A549 (cell line): ENCODE measurements at regions of chr15 and their contacts with region 1.

Region 1: DNA sequence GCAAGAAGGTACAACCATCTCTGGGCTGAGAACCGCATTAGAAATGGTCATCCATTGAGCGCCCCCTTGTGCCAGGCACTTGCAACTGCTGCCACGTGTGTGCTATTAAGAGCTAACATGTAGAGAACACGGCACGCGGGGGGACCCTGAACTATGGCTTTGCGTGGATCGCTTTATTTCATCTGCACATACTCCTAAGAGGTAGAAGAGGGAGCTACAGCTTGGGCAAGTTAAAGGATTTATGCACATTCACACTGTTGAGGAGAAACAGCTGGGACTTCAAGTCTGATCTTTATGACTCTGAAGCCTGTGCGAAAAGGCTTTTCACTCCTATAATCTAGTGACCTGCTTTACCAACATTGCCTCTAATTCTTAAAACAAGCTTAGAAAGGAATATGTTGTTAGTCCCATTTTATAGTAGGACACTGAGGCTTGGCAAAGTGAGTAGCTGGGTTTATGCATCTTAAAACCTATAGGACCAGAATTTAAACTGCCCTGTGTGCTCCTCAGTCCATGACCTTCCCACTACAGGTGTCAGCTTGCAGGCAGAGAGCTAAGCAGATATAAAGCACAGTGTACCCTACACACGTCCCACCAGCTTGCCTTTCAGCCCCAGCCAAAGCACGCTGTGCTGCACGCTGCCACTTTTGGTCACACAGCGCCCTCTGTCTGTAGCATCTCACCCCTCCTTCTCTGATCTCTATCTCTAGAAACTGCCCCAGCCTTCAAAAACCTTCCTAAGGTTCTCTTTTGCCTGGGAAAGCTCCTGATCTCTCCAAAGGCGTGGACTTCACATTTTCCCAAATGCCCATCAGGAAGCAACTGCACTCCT is 57.8 kb downstream of the STARD5 start:
- DNase-seq: peak; percentile 82 to 90
- ATAC-seq: peak; percentile 92 to 98
- H3K4me3 ChIP-seq: no peak overlapping the region
- H3K27ac ChIP-seq: no peak overlapping the region
- H3K4me1 ChIP-seq: peaks cover 4% of the 10 kb centered on the region; the same call in 2 of the 3 replicates
- CTCF ChIP-seq: peak; percentile 79
- EP300 ChIP-seq: no peak
- POLR2A ChIP-seq: no peak
- RAD21 ChIP-seq: peak; percentile 87 to 96

Region 2: DNA sequence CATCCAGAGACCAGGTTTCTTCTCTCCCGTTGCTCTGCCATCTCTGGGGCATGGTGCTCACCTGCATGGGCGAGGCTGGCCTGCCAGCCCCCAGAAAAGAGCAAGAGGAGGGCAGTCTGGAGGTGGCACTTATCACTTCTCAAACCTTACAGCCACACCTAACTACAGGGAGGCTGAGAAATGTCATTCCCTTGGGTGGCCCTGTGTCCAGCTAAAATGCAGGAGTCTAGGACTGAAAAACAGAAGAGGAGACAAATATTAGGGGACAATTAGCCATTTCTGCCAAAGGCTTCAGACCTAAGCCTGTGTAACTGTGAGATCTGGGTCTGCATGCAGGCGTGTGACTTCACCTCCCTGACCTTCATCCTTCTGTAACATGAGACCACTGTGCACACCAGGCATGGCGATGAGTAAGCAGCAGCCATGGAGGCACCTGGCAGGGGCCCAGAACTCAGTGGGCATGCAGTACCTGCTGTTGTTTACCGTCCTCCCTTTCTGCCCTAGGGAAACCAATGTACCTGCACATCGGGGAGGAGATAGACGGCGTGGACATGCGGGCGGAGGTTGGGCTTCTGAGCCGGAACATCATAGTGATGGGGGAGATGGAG is 359.9 kb before region 1 on chr15:
- CTCF ChIA-PET with region 1: no interaction called
- POLR2A ChIA-PET with region 1: no interaction called
- DNase-seq: peak in 1 of 2 experiments; percentile 26
- ATAC-seq: peak in 1 of 2 experiments; percentile 57; a peak in 3 of 6 replicates
- H3K4me3 ChIP-seq: no peak overlapping the region
- H3K27ac ChIP-seq: no peak overlapping the region
- H3K4me1 ChIP-seq: peaks cover 6% of the 10 kb centered on the region; the same call in 1 of the 3 replicates
- CTCF ChIP-seq: no peak
- EP300 ChIP-seq: no peak
- POLR2A ChIP-seq: no peak
- RAD21 ChIP-seq: no peak

Region 3: GRCh38 chr15:81098861-81099651 is 167.1 kb before region 1 on chr15:
- CTCF ChIA-PET with region 1: interaction called, 243 read pairs
- POLR2A ChIA-PET with region 1: no interaction called
- DNase-seq: no peak
- ATAC-seq: peak in 1 of 2 experiments; percentile 37; a peak in 1 of 6 replicates
- H3K4me3 ChIP-seq: no peak overlapping the region
- H3K27ac ChIP-seq: no peak overlapping the region
- H3K4me1 ChIP-seq: no peaks in the 10 kb centered on the region
- CTCF ChIP-seq: no peak
- EP300 ChIP-seq: no peak
- POLR2A ChIP-seq: no peak
- RAD21 ChIP-seq: no peak

Region 4: DNA sequence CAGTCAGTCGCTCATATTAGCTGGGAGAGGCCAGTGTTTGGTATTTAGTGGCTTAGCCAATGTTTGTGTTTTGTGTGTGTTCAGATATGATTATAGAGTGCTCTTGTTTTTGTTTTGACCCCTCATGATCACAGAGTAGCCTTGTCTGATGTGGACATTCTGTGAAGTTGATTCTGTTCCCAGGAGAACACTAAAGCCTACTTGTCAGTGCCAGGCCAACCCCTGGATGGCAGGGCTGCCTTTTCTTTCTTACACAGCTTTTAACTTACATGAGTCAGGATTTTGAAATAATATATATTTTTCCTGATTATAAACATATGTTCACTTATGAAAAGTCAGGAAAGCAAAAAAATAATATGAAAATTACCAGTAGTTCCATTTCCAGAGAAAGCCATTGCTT is 120.2 kb before region 1 on chr15:
- CTCF ChIA-PET with region 1: interaction called, 25 read pairs
- POLR2A ChIA-PET with region 1: no interaction called
- DNase-seq: no peak
- ATAC-seq: no peak
- H3K4me3 ChIP-seq: no peak overlapping the region
- H3K27ac ChIP-seq: no peak overlapping the region
- H3K4me1 ChIP-seq: no peaks in the 10 kb centered on the region
- CTCF ChIP-seq: no peak
- EP300 ChIP-seq: no peak
- POLR2A ChIP-seq: no peak
- RAD21 ChIP-seq: no peak

Region 5: GRCh38 chr15:81189583-81190283 is 76.4 kb before region 1 on chr15:
- CTCF ChIA-PET with region 1: interaction called, 13 read pairs
- POLR2A ChIA-PET with region 1: no interaction called
- DNase-seq: no peak
- ATAC-seq: no peak
- H3K4me3 ChIP-seq: no peak overlapping the region
- H3K27ac ChIP-seq: no peak overlapping the region
- H3K4me1 ChIP-seq: no peaks in the 10 kb centered on the region
- CTCF ChIP-seq: no peak
- EP300 ChIP-seq: no peak
- POLR2A ChIP-seq: no peak
- RAD21 ChIP-seq: no peak

Region 6: DNA sequence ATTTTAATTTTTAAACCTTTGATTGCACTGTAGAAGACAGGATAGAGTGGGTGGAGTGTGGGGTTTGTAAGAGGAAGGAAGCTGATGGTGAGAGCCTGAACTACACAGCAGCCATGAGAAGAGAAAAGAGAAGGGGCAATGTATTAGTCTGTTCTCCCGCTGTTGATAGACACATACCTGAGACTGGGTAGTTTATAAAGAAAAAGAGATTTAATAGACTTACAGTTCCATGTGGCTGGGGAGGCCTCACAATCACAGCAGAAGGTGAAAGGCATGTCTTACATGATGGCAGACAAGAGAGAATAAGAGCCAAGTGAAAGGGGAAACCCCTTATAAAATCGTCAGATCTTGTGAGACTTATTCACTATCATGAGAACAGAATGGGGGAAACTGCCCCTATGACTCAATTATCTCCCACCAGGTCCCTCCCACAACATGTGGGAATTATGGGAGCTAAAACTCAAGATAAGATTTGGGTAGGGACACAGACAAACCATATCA is 20.5 kb after region 1 on chr15:
- CTCF ChIA-PET with region 1: interaction called, 91 read pairs
- POLR2A ChIA-PET with region 1: no interaction called
- DNase-seq: no peak
- ATAC-seq: no peak
- H3K4me3 ChIP-seq: no peak overlapping the region
- H3K27ac ChIP-seq: no peak overlapping the region
- H3K4me1 ChIP-seq: no peaks in the 10 kb centered on the region
- CTCF ChIP-seq: no peak
- EP300 ChIP-seq: no peak
- POLR2A ChIP-seq: no peak
- RAD21 ChIP-seq: no peak

Region 7: DNA sequence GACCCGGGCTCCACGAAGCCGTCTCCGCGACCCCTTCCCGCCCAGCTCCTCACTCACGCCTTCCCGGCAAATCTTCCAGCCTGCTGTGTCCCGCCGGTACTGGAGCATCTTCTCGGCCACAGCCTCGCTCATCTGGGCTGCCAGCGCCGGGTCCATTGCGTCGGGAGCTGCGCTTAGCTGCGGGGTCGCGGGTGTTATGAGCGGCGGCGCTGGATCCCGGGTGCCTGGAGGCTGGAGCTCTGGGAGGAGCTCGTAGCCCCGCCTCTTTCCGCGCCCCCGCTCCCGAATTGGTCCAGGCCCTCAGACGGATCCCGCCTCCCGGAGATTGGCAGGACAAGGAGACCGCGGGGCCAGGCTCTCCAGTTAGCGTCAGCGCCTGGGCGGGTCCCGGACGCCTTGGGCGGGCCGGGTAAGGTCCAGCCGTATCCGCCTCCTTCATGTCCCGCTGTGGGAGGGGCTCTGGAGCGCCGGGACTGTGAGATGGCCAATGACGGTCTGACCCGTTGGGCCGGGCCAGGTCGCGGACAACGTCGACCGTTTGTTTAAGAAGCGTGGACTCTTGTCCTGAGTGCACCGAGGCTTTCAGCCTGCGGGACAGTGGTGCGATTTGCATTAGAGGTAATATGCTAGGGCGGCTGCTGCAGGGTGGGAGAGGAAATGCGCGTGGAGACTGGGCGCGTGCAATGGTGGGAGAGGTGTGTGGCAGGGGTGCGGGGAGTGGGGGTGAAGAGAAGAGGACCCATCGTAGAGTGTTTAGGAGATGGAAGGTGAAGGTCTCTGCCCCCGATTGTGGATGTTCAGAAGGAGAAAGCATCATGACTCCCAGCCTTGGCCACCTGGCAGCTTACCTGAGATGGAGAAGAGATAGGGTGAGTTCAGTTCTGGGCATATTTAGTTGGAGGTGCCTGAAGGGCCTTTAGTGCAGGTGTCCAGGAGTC is 58.1 kb after region 1 on chr15 and contains the start of gene STARD5:
- CTCF ChIA-PET with region 1: interaction called, 32 read pairs
- POLR2A ChIA-PET with region 1: no interaction called
- DNase-seq: peak; percentile 95 to 99
- ATAC-seq: peak; percentile 98 to 100
- H3K4me3 ChIP-seq: peak within 1 kb of the TSS; percentile 61
- H3K27ac ChIP-seq: peak within 1 kb of the TSS; percentile 60 to 81; a peak in 5 of 6 replicates
- H3K4me1 ChIP-seq: peaks cover 8% of the 10 kb centered on the region; the same call in 1 of the 3 replicates
- CTCF ChIP-seq: no peak
- EP300 ChIP-seq: no peak
- POLR2A ChIP-seq: peak; percentile 74
- RAD21 ChIP-seq: no peak
- polyA plus RNA-seq, gene STARD5: 2.8 TPM in 2 replicates

Region 8: DNA sequence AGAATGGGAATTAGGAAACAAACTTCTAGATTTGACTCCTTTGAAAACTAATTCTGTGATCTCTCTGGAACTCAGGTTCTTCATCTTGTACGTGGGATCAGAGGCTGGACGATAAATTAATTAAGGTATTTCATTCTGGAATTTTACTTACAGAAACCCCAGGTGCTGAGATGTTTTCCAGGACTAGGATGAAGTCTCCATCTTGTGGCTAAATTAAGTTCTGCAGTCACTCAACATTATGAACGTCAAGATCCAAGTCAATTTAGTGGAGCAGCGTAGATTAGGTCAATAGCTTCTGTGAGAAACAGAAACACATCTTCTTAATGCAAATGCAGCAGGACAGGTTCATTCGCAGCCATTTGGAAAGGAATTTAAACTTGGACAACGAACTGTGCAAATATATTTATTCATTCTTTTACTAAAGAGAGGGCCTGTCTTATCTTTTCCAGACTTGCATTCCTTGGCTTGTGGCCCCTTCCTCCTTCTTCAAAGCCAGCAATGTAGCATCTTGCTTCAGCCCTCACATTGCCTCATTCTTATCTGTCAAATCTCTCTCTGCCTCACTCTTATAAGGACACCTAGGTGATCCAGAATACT is 134.6 kb after region 1 on chr15:
- CTCF ChIA-PET with region 1: interaction called, 361 read pairs
- POLR2A ChIA-PET with region 1: no interaction called
- DNase-seq: peak; percentile 55 to 61
- ATAC-seq: peak; percentile 67 to 78; a peak in 4 of 6 replicates
- H3K4me3 ChIP-seq: no peak overlapping the region
- H3K27ac ChIP-seq: no peak overlapping the region
- H3K4me1 ChIP-seq: no peaks in the 10 kb centered on the region
- CTCF ChIP-seq: peak; percentile 82
- EP300 ChIP-seq: no peak
- POLR2A ChIP-seq: no peak
- RAD21 ChIP-seq: peak; percentile 86 to 87

Region 9: GRCh38 chr15:81433462-81433861 is 167.3 kb after region 1 on chr15:
- CTCF ChIA-PET with region 1: no interaction called
- POLR2A ChIA-PET with region 1: no interaction called
- DNase-seq: no peak
- ATAC-seq: no peak
- H3K4me3 ChIP-seq: no peak overlapping the region
- H3K27ac ChIP-seq: no peak overlapping the region
- H3K4me1 ChIP-seq: no peaks in the 10 kb centered on the region
- CTCF ChIP-seq: no peak
- EP300 ChIP-seq: no peak
- POLR2A ChIP-seq: no peak
- RAD21 ChIP-seq: no peak